ENCODE measurements at regions of chr2 and their contacts with region 1.

Region 1: DNA sequence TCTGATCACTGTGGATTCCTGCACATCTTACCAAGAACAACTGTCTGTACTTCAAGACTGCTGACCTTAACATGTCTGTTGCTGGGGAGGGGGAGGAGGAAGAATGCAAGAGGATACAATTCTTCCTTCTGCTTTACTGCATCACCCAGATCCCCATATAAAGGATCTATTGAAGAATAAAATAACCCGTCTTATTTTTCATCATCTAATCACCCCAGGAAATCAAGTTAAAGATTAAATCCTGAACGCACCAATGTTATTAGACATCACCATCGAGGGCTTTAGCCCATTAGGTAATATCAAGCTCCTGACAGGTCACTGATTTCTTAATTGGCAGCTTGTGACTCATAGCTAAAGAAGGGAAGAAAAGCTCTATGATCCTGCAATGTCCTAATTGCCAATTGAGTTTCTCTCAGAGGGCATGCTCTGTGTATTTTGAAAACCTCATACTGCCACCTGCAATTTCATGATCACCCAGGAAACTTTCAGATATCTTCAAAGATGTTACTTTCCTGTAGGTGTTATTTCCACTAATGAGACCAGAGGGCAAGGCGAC is 75.4 kb upstream of the KCNE4 start:
- DNase-seq: no peak
- ATAC-seq: no peak

Region 2: DNA sequence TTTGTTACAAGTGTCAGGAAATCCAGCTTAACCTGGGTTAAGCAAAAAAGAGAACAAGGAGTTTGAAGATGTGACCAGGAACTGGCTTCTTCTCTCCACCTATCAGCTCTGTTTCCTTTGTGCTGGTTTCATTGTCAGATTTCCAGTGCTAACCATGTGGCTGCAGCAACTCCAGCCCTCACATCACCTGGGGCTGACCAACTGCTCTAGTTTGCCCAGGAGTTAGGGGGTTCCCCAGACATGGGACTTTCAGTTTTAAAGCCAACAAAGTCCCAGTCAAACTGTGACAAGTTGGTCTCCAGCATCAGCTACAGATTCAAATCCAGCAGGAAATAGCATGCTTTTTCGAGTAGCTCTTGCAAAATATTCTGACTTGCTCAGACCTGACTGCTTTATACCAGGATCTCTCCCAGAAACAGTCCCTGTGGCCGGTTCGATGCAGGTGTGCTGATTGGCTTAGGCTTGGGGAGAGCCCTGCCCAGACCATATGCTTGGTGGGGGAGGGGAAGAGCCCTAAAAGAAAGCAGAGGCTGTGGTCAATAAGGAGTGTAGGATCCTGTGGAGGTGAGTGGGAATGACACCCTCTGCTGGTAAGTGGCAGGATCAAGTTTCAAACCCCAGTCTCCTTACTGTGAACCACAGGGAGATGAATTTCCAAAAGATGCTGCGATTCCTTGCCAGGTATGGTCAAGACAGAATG is 124.9 kb after region 1 on chr2:
- intact Hi-C with region 1: loop called (anchors 5 kb)
- DNase-seq: no peak
- ATAC-seq: no peak

Region 3: DNA sequence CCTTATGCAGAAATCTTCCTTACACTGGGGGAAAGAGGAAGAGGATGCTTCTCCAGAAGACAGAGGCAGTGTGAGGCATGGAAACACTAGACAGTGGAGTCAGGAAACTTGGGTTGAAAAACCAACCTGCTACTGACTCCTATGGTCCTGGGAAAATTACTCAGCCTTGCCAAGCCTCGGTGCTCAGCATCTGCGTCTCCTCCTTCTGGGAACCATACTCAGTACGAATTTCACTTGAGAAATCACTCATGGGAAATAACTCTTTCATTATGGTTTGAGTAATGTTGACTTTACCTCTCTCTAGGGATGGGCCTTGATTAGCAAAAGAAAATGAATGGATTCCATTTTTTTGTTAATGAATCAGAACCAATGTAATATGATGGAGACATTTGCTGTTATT is 171.9 kb after region 1 on chr2:
- intact Hi-C with region 1: no loop called
- DNase-seq: no peak
- ATAC-seq: no peak

Region 4: DNA sequence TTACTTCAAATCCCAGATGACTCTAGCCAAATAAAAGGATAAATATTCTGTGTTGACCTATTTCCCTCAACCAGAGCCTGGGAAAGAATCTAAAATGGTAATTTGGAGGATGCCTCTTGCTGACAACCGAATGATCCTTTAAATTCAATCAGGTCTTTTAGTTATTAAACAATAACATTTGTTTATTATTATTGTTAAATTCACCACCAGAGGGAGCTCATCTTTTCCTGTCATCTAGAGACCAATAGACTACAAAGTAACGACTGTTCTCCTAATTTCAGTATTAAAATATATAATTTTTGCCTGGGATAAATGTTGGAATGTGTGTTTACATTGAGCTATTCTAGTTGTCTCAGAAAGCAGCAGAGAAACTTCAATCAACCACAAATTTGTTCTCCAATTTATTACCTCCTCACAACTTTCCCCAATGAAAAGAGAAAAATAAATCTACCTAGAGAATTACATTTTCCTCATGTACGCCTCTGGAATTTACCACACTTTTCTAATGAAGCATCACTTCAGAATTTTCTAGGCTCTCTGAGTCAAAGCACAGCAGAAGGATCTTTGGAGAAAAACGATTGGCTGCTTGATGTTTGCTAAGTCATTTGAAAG is 482.8 kb after region 1 on chr2:
- intact Hi-C with region 1: loop called (anchors 10 kb)
- DNase-seq: no peak
- ATAC-seq: no peak

Region 5: GRCh38 chr2:223797811-223798721 is 821.5 kb after region 1 on chr2:
- intact Hi-C with region 1: loop called (anchors 2 kb)
- DNase-seq: no peak
- ATAC-seq: peak; percentile 54

Measured in Right ventricle myocardium inferior (tissue), 1 donor.